Activated naive CD4-positive, alpha-beta T cell treated with anti-CD3 and anti-CD28 coated beads for 36 hours (primary cell): ENCODE measurements at regions of chr6 and their contacts with region 1.

Region 1: DNA sequence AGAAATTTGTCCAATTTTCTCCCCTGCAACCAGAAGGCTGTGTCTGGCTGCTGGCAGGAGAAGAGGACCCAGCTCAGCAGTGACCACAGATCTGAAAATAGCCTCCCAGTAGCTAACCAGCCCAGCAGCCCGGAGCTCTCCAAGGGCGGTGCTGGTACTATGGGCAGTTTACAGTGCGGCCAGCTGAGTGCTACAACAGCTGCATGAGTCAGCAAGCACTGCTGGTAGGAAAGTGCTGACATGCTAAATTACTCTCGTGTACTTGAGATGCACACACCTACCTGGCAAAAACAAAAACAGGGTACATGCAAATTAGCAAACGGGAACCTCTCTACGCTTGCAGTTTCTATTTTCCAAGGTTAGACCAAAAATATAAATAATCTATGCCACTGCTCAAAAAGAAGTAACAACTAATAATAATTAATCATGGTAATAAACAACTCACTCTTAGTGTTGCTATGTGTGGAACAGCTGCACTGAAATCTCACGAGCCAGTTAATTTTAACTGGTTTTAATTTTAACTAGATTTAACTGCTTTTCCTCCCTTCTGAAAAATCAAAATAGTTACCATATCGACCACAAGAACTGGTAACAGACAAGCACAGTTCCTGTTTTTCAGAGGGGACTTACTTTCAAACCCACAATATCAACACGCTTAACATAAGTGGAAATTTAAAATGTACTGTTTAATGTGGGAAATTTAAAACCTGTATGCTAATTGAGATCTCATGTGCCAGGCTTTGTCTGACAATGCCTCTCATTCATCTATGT is 10.8 kb downstream of the BACH2 start:
- DNase-seq: peak; percentile 68
- H3K4me3 Mint-ChIP-seq: peak overlapping the region; percentile 70
- H3K27ac Mint-ChIP-seq: peak overlapping the region; percentile 94
- H3K4me1 Mint-ChIP-seq: peaks cover 94% of the 10 kb centered on the region
- H3K27me3 Mint-ChIP-seq: no peaks in the 10 kb centered on the region

Region 2: GRCh38 chr6:89412071-89413005 is 873.5 kb before region 1 on chr6 and contains the start of gene RRAGD:
- CTCF ChIA-PET with region 1: no interaction called
- intact Hi-C with region 1: loop called (anchors 5 kb)
- DNase-seq: peak; percentile 67
- H3K4me3 Mint-ChIP-seq: peak within 1 kb of the TSS; percentile 91
- H3K27ac Mint-ChIP-seq: peak within 1 kb of the TSS; percentile 31
- H3K4me1 Mint-ChIP-seq: peaks cover 23% of the 10 kb centered on the region
- H3K27me3 Mint-ChIP-seq: peaks cover 4% of the 10 kb centered on the region
- total RNA-seq, gene RRAGD: 11.3 to 13.2 TPM

Region 3: DNA sequence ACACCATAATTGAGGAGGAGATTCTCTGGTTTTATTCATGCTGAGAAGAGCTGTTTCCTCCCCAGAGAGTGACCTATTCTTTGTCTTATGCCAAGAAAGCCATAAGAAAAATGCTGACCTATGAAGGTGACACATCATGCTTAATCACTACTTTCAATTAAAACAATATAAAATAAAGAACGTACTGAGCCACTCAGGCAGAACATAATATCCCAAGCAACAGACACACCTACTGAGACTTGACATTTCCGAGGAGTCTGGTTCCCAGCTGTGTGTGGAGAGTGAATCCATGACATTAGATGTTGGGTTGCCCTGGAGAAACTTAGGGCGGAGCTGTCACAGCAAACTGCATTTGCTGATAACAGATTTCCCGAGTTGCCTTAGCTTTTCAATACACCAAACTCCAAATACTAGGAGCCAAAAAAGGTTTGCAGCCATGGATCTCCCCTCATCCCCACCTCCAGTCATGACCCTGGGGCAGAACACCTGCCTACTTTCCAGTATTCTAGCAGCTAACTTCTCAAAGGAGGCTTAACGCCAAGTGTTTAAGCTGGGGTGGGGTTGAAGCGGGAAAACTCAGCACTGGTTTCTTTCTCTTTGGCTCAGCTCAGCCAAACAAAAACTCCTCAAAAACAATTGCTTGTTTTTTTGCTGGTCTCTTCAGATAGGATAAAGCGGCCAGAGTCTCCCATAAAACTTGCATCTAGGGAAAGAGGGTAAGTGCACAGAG is 81.3 kb before region 1 on chr6:
- CTCF ChIA-PET with region 1: interaction called, 6 read pairs
- intact Hi-C with region 1: loop called (anchors 1 kb)
- DNase-seq: no peak
- H3K4me3 Mint-ChIP-seq: no peak overlapping the region
- H3K27ac Mint-ChIP-seq: no peak overlapping the region
- H3K4me1 Mint-ChIP-seq: peaks cover 79% of the 10 kb centered on the region
- H3K27me3 Mint-ChIP-seq: no peaks in the 10 kb centered on the region

Region 4: GRCh38 chr6:90256698-90257485 is 28.9 kb before region 1 on chr6:
- CTCF ChIA-PET with region 1: no interaction called
- intact Hi-C with region 1: loop called (anchors 1 kb)
- DNase-seq: peak; percentile 46
- H3K4me3 Mint-ChIP-seq: no peak overlapping the region
- H3K27ac Mint-ChIP-seq: peak overlapping the region; percentile 78
- H3K4me1 Mint-ChIP-seq: peaks cover 94% of the 10 kb centered on the region
- H3K27me3 Mint-ChIP-seq: no peaks in the 10 kb centered on the region

Region 5: GRCh38 chr6:90393232-90393884 is 107.6 kb after region 1 on chr6:
- CTCF ChIA-PET with region 1: interaction called, 71 read pairs
- intact Hi-C with region 1: loop called (anchors 1 kb)
- DNase-seq: peak; percentile 92
- H3K4me3 Mint-ChIP-seq: no peak overlapping the region
- H3K27ac Mint-ChIP-seq: peak overlapping the region; percentile 70
- H3K4me1 Mint-ChIP-seq: peaks cover 78% of the 10 kb centered on the region
- H3K27me3 Mint-ChIP-seq: no peaks in the 10 kb centered on the region

Region 6: DNA sequence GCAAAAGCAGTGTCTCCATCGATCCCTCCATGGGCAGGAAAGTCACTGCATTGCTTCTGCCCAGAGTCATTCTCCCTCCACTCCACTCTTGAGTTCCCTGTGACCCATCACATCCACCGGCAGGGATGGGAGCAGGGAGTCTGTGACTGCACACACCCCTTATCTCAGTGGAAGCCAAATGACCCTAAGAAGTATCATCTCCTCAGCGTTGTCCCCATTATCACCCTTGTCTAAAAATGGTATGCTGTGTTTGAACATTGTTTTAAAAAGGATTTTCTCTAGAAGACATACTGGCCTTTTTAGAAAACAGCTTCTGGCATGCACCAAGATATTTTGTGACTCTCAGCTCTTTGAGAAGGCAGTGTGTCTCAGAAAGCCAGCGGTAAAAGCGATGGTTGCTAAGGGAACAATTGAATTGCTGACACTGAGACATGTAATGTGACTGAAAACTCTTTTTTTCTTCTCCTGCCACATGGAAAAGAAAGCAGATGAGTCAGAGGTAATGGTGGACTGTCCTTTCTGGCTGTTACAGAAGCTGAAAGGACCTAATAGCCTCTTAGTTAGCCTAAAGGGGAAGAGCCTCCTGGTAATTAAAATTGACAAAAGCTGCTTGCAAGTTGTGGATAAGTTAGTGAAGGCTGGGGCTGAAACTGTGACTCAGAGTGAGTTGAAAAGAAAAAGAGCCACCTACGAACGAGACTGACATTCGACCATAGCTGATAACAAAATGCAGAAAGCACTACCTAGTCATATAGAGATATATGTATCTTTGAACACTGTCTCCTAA is 180.6 kb after region 1 on chr6:
- CTCF ChIA-PET with region 1: interaction called, 176 read pairs
- intact Hi-C with region 1: no loop called
- DNase-seq: peak; percentile 73
- H3K4me3 Mint-ChIP-seq: no peak overlapping the region
- H3K27ac Mint-ChIP-seq: peak overlapping the region; percentile 90
- H3K4me1 Mint-ChIP-seq: peaks cover 82% of the 10 kb centered on the region
- H3K27me3 Mint-ChIP-seq: no peaks in the 10 kb centered on the region

Region 7: GRCh38 chr6:90586836-90587638 is 301.2 kb after region 1 on chr6 and contains the start of gene MAP3K7:
- CTCF ChIA-PET with region 1: no interaction called
- intact Hi-C with region 1: loop called (anchors 5 kb)
- DNase-seq: peak; percentile 98
- H3K4me3 Mint-ChIP-seq: peak within 1 kb of the TSS; percentile 99
- H3K27ac Mint-ChIP-seq: peak within 1 kb of the TSS; percentile 99
- H3K4me1 Mint-ChIP-seq: peaks cover 40% of the 10 kb centered on the region
- H3K27me3 Mint-ChIP-seq: no peaks in the 10 kb centered on the region
- total RNA-seq, gene MAP3K7: 23.2 to 23.6 TPM